Calu3 (cell line): ENCODE measurements at regions of chr11 and their contacts with region 1.

Region 1: GRCh38 chr11:78564490-78565467 is 9.9 kb downstream of the NARS2 start:
- DNase-seq: peak; percentile 43
- H3K4me3 Mint-ChIP-seq: no peak overlapping the region
- H3K27ac Mint-ChIP-seq: no peak overlapping the region
- H3K4me1 Mint-ChIP-seq: no peaks in the 10 kb centered on the region
- H3K27me3 Mint-ChIP-seq: no peaks in the 10 kb centered on the region
- CTCF ChIP-seq: peak; percentile 52

Region 2: DNA sequence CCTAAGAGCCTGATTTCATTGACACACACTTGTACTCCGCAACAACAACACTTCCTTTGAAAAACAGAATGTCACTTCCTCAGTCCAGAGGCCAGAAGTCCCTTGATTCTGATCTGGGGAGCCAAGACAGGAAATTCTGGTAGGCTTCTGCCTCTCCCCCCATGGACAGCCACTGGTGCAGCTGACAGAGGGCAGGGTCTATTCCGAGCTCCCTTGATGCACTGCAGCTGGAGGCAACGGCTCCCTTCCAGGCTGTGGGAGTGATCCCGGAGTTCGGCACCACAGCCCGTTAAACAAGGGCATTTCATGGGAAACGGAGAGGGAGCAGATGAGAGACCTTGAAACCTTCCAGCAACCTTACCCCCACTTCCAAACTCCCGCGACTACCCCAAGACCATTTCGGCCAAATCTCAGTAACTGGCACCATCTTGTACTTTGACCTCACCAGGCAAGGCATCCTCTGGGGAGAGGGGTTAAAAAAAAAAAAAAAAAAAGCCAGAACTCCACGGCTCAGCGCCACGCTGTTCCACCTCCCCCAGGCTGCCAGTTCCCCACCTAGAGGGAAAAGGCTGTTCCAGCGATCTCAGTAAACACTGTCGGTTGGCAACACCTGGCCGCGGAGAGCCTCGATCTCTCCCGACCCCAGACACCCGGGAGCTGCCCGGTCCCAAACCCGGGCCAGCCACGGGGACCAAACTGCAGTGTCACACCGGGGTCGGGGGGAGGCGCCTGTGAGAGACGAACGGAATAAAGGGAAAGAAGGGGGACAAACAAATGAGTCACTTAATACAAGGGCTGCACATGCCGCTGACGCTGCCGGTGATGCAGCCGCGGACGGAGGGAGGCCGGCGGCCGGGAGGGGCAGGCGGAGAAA is 148.2 kb before region 1 on chr11:
- CTCF ChIA-PET with region 1: interaction called, 8 read pairs
- intact Hi-C with region 1: loop called (anchors 5 kb)
- DNase-seq: peak; percentile 88
- H3K4me3 Mint-ChIP-seq: peak overlapping the region; percentile 93
- H3K27ac Mint-ChIP-seq: peak overlapping the region; percentile 73
- H3K4me1 Mint-ChIP-seq: peaks cover 42% of the 10 kb centered on the region
- H3K27me3 Mint-ChIP-seq: peaks cover 7% of the 10 kb centered on the region
- CTCF ChIP-seq: peak; percentile 61